Left cardiac atrium (tissue), 4 donors: ENCODE measurements at regions of chr9 and their contacts with region 1.

Region 1: DNA sequence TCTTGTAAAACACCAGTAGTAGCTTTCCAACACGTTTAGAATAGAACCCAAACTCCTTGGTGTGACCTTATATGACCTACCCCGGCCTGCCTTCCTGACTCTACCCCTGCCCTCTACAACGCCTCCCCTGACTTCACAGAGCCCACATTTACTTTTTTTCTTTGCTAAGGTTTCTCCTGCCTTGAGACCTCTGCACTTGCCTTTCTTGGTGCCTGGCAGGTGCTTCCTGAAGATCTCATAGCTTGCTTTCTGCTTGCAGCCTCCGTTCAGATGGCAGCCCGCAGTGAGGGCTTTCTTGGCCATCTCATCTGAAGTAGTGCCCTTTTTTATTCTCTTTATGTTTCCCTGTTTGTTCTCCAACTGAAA is 24.3 kb downstream of the NUP214 start:
- DNase-seq: no peak
- ATAC-seq: no peak

Region 2: GRCh38 chr9:131459056-131459455 is 309.4 kb after region 1 on chr9:
- intact Hi-C with region 1: loop called in 1 of 2 experiments (anchors 10 kb)
- DNase-seq: no peak
- ATAC-seq: no peak

Region 3: GRCh38 chr9:131809941-131810344 is 660.3 kb after region 1 on chr9:
- intact Hi-C with region 1: no loop called
- DNase-seq: no peak
- ATAC-seq: no peak

Region 4: DNA sequence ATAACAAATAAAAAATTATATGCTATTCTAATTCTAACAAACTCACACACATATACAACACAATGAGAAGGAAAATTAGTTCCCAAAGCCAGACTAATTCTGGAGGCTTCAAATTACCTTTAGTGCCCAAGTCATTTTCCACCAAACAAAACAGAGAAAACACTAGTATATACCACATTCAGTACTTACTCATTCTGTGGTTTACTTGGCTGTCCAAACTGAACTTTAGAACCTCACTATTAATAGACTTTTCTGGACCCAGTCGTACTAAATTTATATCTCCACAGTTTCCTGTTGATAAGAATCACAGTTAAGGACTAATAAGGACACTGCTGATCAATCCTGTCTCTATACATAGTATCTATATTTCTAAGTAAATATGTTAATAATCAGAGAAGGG is 1138.7 kb after region 1 on chr9:
- intact Hi-C with region 1: loop called in 1 of 2 experiments (anchors 10 kb)
- DNase-seq: no peak
- ATAC-seq: no peak